ENCODE measurements at regions of chr19 and their contacts with region 1.

Region 1: GRCh38 chr19:39335168-39335548 is 685 bp downstream of the GMFG start:
- DNase-seq: peak in 4 of 10 donors; percentile 12 to 33 (median 28)
- ATAC-seq: peak; percentile 46 to 50
- H3K4me3 Mint-ChIP-seq: peak overlapping the region; percentile 95 to 100 (median 99)
- H3K27ac Mint-ChIP-seq: peak overlapping the region; percentile 96 to 100 (median 98)
- H3K4me1 Mint-ChIP-seq: peaks cover 28 to 76% (median 67%) of the 10 kb centered on the region in 4 donors
- H3K27me3 Mint-ChIP-seq: no peaks in the 10 kb centered on the region

Region 2: GRCh38 chr19:39122934-39123731 is 212.0 kb before region 1 on chr19:
- POLR2A ChIA-PET with region 1: interaction called, 12 read pairs
- DNase-seq: no peak
- ATAC-seq: no peak
- H3K4me3 Mint-ChIP-seq: peak overlapping the region in 3 of 10 donors; percentile 2 to 57 (median 48)
- H3K27ac Mint-ChIP-seq: peak overlapping the region in 1 of 10 donors; percentile 27
- H3K4me1 Mint-ChIP-seq: peaks cover 14 to 46% (median 40%) of the 10 kb centered on the region in 4 donors
- H3K27me3 Mint-ChIP-seq: peaks cover 0 to 4% (median 1%) of the 10 kb centered on the region in 5 donors

Region 3: DNA sequence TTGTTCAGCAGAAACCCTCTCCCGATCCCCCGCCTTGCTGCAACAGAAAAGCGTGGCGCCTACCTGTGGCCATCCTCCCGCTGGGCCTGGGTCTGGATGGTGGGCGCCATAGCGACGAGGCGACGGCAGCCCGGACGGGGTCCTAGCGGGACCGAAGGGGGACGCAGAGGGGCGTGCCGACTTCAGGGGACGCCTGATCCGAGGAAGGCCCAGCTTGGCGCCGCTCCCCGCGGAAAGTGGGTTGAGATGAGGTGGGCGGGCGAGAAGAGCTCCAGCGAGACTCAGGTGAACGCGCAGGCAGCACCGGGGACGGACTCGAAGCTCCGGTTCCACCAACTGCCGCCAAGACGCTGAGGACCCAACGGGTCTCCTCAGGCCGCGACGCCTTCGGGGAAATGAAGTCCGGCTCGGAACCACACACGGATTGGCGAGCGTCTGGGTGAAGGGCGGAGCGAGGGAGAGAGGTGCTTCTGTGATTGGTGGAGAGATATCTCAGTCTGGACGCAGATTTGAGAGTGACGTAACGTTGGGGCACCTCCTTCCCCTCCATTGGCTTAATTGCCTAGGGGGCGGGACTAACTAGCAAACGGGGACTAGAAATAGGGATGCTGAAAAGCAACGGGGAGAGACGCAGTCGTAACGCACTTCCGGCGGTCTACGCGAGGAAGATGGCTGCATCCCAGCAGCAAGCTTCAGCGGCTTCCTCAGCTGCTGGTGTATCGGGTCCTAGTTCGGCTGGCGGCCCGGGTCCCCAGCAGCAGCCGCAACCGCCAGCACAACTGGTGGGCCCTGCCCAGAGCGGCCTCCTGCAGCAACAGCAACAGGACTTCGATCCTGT is 55.8 kb after region 1 on chr19 and contains the starts of genes MED29 and PAF1:
- POLR2A ChIA-PET with region 1: interaction called, 19 read pairs
- DNase-seq: peak; percentile 86 to 99 (median 97)
- ATAC-seq: peak; percentile 91 to 95
- H3K4me3 Mint-ChIP-seq: peak within 1 kb of the TSS; percentile 95 to 98 (median 98)
- H3K27ac Mint-ChIP-seq: peak within 1 kb of the TSS; percentile 94 to 100 (median 100)
- H3K4me1 Mint-ChIP-seq: peaks cover 15 to 58% (median 50%) of the 10 kb centered on the region in 4 donors
- H3K27me3 Mint-ChIP-seq: no peaks in the 10 kb centered on the region
- polyA plus RNA-seq, gene MED29: 48.1 to 71.4 (median 59.6) TPM
- polyA plus RNA-seq, gene PAF1: 30.7 to 53.0 (median 43.8) TPM

Region 4: GRCh38 chr19:39397360-39398296 is 62.5 kb after region 1 on chr19:
- POLR2A ChIA-PET with region 1: interaction called, 12 read pairs
- DNase-seq: peak; percentile 86 to 96 (median 94)
- ATAC-seq: peak; percentile 52
- H3K4me3 Mint-ChIP-seq: peak overlapping the region; percentile 40 to 84 (median 78)
- H3K27ac Mint-ChIP-seq: peak overlapping the region; percentile 90 to 99 (median 96)
- H3K4me1 Mint-ChIP-seq: peaks cover 27 to 70% (median 63%) of the 10 kb centered on the region in 4 donors
- H3K27me3 Mint-ChIP-seq: no peaks in the 10 kb centered on the region

Region 5: GRCh38 chr19:39406656-39407393 is 71.7 kb after region 1 on chr19 and contains the start of gene ZFP36:
- POLR2A ChIA-PET with region 1: interaction called, 17 read pairs
- DNase-seq: peak; percentile 81 to 95 (median 89)
- ATAC-seq: peak; percentile 27 to 28
- H3K4me3 Mint-ChIP-seq: peak within 1 kb of the TSS; percentile 79 to 98 (median 94)
- H3K27ac Mint-ChIP-seq: peak within 1 kb of the TSS; percentile 94 to 100 (median 98)
- H3K4me1 Mint-ChIP-seq: peaks cover 36 to 71% (median 51%) of the 10 kb centered on the region in 4 donors
- H3K27me3 Mint-ChIP-seq: peaks cover 0 to 4% (median 0%) of the 10 kb centered on the region in 5 donors
- polyA plus RNA-seq, gene ZFP36: 70.4 to 137 (median 109) TPM

Region 6: GRCh38 chr19:39412100-39412866 is 77.1 kb after region 1 on chr19 and contains the start of gene PLEKHG2:
- POLR2A ChIA-PET with region 1: interaction called, 17 read pairs
- DNase-seq: peak; percentile 91 to 100 (median 98)
- ATAC-seq: peak; percentile 58 to 70
- H3K4me3 Mint-ChIP-seq: peak within 1 kb of the TSS; percentile 79 to 98 (median 89)
- H3K27ac Mint-ChIP-seq: peak within 1 kb of the TSS; percentile 93 to 100 (median 98)
- H3K4me1 Mint-ChIP-seq: peaks cover 39 to 62% (median 42%) of the 10 kb centered on the region in 4 donors
- H3K27me3 Mint-ChIP-seq: peaks cover 0 to 4% (median 0%) of the 10 kb centered on the region in 5 donors
- polyA plus RNA-seq, gene PLEKHG2: 4.2 to 5.0 (median 4.8) TPM